A549 (cell line): ENCODE measurements at regions of chr1 and their contacts with region 1.

Region 1: GRCh38 chr1:206030714-206031113 is 7.0 kb upstream of the CTSE start:
- DNase-seq: peak; percentile 58 to 83
- ATAC-seq: peak; percentile 96 to 99
- H3K4me3 ChIP-seq: no peak overlapping the region
- H3K27ac ChIP-seq: no peak overlapping the region
- H3K4me1 ChIP-seq: peaks cover 3% of the 10 kb centered on the region; the same call in 1 of the 3 replicates
- CTCF ChIP-seq: peak; percentile 85
- EP300 ChIP-seq: no peak
- POLR2A ChIP-seq: no peak
- RAD21 ChIP-seq: peak; percentile 70 to 71

Region 2: GRCh38 chr1:205983925-205984725 is 46.6 kb before region 1 on chr1:
- CTCF ChIA-PET with region 1: interaction called, 47 read pairs
- POLR2A ChIA-PET with region 1: no interaction called
- DNase-seq: peak; percentile 57 to 62
- ATAC-seq: peak; percentile 89 to 97
- H3K4me3 ChIP-seq: no peak overlapping the region
- H3K27ac ChIP-seq: no peak overlapping the region
- H3K4me1 ChIP-seq: peaks cover 4% of the 10 kb centered on the region; the same call in 1 of the 3 replicates
- CTCF ChIP-seq: peak; percentile 76
- EP300 ChIP-seq: no peak
- POLR2A ChIP-seq: no peak
- RAD21 ChIP-seq: peak; percentile 81 to 88

Region 3: DNA sequence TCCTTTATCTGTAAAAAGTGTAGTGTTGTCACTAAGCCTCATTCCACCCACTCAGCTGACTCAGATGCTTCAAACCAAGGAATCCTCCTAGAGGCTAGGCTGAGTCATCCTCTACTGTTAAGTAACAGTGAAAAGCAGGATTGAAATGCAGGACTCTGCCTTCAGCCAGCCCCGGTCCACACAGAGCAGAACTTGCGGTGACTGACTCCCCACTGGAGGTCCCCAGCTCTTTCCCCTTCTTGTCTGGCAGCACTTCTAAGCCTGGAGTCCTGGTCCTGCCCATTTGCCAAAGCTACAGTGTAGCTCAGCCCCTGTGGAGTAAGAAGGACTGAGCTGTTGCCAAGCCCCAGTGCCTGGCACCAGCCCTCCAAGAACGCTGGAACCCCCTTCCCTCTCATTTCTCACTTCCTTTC is 29.2 kb before region 1 on chr1:
- CTCF ChIA-PET with region 1: interaction called, 12 read pairs
- POLR2A ChIA-PET with region 1: no interaction called
- DNase-seq: peak; percentile 53 to 90
- ATAC-seq: peak; percentile 90
- H3K4me3 ChIP-seq: no peak overlapping the region
- H3K27ac ChIP-seq: peak overlapping the region in 1 of 2 experiments; percentile 76; a peak in 3 of 6 replicates
- H3K4me1 ChIP-seq: peaks cover 24% of the 10 kb centered on the region
- CTCF ChIP-seq: no peak
- EP300 ChIP-seq: no peak
- POLR2A ChIP-seq: no peak
- RAD21 ChIP-seq: no peak

Region 4: GRCh38 chr1:206050655-206051235 is 20.0 kb after region 1 on chr1:
- CTCF ChIA-PET with region 1: interaction called, 17 read pairs
- POLR2A ChIA-PET with region 1: no interaction called
- DNase-seq: no peak
- ATAC-seq: no peak
- H3K4me3 ChIP-seq: no peak overlapping the region
- H3K27ac ChIP-seq: no peak overlapping the region
- H3K4me1 ChIP-seq: peaks cover 13% of the 10 kb centered on the region; the same call in 2 of the 3 replicates
- CTCF ChIP-seq: no peak
- EP300 ChIP-seq: no peak
- POLR2A ChIP-seq: no peak
- RAD21 ChIP-seq: no peak

Region 5: DNA sequence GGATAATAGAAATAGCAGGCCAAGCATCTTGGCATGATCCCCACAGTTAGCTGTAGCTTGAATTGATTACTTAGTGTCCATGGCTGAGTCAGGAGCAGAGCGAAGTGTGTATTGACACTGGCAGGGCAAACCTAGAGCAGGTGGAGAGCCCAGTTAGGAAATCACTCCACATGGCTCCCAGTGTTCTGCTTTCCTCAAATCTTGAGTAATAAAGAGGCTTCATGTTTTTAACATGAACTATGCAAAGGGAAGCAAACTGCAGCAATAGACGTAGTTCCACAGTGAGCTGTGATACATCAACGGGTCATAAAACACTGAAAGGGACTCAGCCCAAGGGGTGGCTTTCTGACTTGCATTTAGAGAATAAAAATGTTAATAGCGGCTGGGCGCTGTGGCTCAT is 51.1 kb after region 1 on chr1:
- CTCF ChIA-PET with region 1: interaction called, 11 read pairs
- POLR2A ChIA-PET with region 1: no interaction called
- DNase-seq: no peak
- ATAC-seq: no peak
- H3K4me3 ChIP-seq: no peak overlapping the region
- H3K27ac ChIP-seq: no peak overlapping the region
- H3K4me1 ChIP-seq: no peaks in the 10 kb centered on the region
- CTCF ChIP-seq: no peak
- EP300 ChIP-seq: no peak
- POLR2A ChIP-seq: no peak
- RAD21 ChIP-seq: no peak

Region 6: DNA sequence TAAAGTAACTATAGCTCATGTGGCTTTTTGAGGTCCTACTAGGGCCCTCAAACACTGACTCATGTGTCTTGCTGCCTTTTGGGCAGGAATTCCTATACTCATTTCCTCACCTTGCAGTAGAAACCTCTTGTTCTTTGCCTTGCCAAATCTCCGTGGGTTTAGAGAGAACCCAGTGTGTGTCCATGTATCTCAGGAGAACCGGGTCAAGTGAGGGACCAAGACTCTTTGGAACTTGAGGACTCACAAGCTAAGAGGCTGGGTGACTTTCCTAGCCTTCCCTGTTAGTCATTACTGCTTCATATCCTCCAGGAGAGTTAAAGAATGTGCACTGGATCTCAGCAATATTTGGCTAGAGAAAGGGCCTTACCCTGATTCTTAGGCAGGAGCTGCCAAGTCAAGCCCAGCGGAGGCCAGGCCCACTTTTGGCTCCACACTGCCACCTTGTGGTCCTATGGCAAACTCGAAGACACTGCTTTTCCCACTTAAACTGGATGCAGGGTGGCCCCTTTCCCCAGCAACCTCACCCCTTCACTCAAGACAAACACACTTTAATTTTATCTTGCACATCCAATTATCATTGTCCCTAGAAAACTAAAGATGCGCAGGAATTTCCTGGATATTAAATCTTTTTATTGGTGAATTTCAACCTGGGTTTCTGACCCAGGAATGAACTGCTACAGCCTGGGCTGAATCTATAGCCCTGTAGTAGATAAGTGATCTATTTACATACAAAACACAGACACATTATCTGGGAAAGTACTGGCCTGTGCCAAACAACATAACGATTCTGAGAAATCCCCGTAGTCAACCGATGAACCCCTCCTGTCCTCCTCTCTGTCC is 75.8 kb after region 1 on chr1:
- CTCF ChIA-PET with region 1: interaction called, 67 read pairs
- POLR2A ChIA-PET with region 1: no interaction called
- DNase-seq: peak; percentile 71 to 81
- ATAC-seq: peak; percentile 87 to 98
- H3K4me3 ChIP-seq: no peak overlapping the region
- H3K27ac ChIP-seq: no peak overlapping the region
- H3K4me1 ChIP-seq: no peaks in the 10 kb centered on the region
- CTCF ChIP-seq: peak; percentile 92
- EP300 ChIP-seq: no peak
- POLR2A ChIP-seq: no peak
- RAD21 ChIP-seq: peak; percentile 90 to 94